ENCODE measurements at regions of chr12 and their contacts with region 1.

Region 1: DNA sequence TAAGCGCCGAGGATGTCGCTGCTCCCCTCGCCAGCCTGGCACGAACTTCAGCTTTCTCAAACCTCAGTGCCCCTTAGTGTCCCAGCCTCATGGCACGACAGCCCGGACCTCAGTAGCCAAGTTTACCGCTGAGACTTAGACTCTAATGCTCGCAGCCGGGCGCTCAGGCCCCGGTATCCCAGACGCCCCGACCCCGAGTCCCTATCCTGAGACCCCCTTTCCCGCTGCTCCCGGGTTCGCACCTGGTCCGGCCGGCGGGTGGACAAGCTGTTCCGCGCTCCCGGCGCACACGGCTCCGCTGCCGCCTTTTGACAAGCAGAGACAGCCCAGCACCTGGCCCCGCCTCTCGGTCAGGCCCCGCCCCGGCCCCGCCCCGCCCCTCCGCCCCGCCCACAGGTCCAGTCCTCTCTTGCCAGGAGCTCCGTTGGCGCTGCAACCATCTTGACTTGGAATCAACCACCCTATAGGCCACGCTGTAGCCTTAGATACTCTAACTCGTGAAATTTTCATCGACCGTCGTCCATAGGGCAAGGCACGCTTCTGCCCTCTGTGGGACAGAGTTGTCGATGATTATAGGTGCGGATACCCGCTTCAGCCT is at the start of gene VDR:
- DNase-seq: peak; percentile 79
- ATAC-seq: peak; percentile 89
- total RNA-seq, gene VDR: 0.11 TPM

Region 2: GRCh38 chr12:47686645-47687240 is 218.1 kb before region 1 on chr12:
- intact Hi-C with region 1: no loop called
- DNase-seq: no peak
- ATAC-seq: peak; percentile 67

Region 3: GRCh38 chr12:47949441-47950308 is 44.9 kb after region 1 on chr12:
- intact Hi-C with region 1: loop called (anchors 5 kb)
- DNase-seq: peak; percentile 88
- ATAC-seq: peak; percentile 96

Measured in Right ventricle myocardium superior (tissue), 1 donor.